Right ventricle myocardium inferior (tissue), 1 donor: ENCODE measurements at regions of chr1 and their contacts with region 1.

Region 1: DNA sequence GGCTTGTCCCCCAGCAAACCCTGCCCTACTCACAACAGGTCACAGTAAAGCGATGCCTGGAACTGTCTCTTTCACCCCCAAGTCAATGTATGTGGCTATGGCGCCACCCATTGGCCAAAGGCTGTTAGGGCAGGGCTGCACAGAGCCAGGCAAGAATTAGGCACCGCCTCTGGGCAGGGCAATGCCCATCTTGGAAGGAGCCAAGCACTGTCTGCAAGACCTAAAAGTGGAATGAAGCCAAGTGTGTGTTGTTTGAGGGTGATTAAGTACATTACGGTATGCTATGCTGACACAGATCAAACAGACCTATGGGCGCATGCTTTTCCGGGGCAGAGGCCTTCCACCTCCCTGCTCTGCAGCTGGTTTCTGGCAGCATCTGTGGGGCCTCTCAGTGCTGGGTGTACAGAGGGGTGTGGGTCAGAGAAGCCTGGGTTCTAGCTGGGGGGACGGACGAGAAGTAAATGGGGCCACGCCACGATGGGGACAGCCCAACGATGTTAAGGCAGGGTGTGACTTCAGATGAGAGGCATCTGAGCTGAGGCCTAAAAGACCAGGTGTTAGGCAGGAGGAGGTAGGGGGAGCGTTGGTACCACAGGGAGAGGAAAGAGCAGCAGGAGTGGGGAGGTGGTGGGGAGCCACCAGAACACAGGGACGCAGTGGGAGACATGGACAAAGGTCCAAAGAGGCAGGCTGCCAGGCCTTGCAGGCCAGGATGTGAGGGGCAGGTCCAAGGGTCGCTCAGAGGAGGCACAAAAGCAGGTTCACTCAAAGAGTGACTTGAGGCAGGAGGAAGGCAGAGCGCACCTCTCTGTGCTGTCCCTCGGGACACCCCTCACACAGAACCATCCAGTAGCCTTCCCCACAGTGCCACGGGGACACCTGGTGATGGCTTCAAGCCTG is 49.8 kb downstream of the ACOT7 start:
- DNase-seq: no peak
- ATAC-seq: peak; percentile 81

Region 2: DNA sequence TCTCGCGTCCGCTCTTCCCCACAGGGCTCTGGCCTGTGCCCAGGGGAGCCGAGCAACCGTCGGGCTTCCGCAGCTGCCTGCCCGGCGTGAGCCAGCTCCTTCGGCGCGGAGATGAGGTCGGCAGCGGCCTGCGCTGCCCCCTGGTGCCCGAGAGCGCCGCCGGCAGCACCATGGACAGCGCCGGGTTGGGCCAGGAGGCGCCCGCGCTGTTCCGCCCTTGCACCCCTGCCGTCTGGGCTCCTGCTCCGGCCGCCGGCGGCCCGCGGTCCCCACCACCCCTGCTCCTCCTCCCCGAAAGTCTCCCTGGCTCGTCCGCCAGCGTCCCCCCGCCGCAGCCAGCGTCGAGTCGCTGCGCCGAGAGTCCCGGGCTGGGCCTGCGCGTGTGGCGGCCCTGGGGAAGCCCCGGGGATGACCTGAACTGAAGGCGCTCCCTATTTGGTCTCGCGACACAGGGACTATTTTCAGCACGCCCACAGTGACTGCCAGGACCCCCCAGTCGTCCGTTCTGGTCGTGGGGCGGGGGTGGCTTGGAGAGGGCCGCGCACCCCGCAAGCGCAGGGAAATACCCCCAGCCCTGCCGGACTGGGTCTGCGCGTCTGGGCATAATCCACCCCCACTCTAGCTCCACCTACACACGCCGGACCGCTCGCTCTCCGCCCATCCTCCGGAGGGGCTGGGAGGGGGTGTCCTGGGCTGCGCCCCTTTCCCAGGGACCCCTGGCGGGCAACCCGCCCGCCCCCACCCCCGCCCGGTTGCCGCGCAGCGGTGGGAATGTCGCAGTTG is 98.5 kb before region 1 on chr1:
- intact Hi-C with region 1: loop called (anchors 1 kb)
- DNase-seq: peak; percentile 88
- ATAC-seq: peak; percentile 78